Tibial artery (tissue), 4 donors: ENCODE measurements at regions of chr1 and their contacts with region 1.

Region 1: DNA sequence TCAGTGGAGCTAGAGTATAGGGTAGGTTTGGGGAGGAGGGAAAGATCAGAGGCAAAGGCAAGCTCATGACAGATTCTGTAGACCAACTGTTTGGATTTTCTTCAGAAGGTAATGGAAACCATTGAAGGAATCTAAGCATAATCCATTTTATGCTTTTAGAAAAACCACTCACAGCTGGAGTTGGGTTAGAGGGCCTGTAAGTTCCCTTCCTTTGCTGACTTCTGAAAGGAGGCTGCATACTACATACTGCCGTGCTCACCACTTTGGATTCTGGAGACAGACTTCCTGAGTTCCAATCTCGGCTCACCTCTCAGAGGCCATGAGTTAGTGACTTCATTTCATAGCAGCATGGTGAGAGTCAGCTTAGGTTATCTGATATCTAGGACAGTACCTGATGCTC is 6.4 kb upstream of the SYT2 start:
- DNase-seq: no peak
- H3K4me3 ChIP-seq: no peak overlapping the region
- H3K27ac ChIP-seq: no peak overlapping the region
- H3K4me1 ChIP-seq: peaks cover 0 to 7% (median 2%) of the 10 kb centered on the region in 4 donors
- H3K27me3 ChIP-seq: peaks cover 0 to 2% of the 10 kb centered on the region in 2 donors
- CTCF ChIP-seq: no peak

Region 2: DNA sequence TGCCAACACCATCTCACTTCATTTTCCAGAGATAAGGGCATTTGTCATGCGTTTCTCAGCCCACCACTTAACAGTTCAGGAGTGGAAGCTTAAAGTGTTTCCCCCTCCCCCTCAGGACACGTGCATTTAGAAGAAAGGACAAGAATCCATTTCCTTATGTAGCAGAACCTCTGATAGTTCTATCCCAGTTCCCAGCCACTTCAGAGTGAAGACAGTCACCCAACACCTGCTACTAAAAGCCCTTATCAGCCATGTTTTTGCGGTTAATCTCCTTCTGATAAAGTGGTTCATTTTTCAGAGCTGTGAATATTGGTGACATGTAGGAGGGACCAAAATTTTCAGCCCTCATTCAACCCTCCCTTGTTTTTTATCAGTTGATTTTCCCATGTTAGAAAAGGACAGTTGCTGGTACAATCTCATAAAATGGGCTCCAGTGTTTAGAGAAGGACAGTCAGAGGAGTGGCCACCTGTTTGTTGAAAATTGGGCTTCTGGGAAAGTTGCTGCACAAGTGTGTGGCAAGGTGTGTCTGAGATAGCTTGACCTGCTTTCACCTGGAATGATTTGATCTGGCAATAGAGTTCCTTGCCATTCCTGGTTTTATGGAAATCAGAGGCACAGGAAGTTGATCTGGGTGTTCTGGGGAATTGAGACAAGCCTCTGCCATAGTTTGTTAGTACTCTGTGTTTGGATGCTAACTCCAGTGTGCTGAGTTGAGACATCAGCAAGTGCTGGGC is 254.1 kb before region 1 on chr1:
- intact Hi-C with region 1: loop called (anchors 5 kb)
- DNase-seq: no peak
- H3K4me3 ChIP-seq: no peak overlapping the region
- H3K27ac ChIP-seq: no peak overlapping the region
- H3K4me1 ChIP-seq: peaks cover 0 to 28% (median 9%) of the 10 kb centered on the region in 4 donors
- H3K27me3 ChIP-seq: no peaks in the 10 kb centered on the region
- CTCF ChIP-seq: no peak

Region 3: GRCh38 chr1:202656951-202657646 is 59.6 kb before region 1 on chr1:
- intact Hi-C with region 1: no loop called
- DNase-seq: no peak
- H3K4me3 ChIP-seq: no peak overlapping the region
- H3K27ac ChIP-seq: no peak overlapping the region
- H3K4me1 ChIP-seq: no peaks in the 10 kb centered on the region
- H3K27me3 ChIP-seq: peaks cover 0 to 81% of the 10 kb centered on the region in 2 donors
- CTCF ChIP-seq: no peak

Region 4: GRCh38 chr1:202742496-202742895 is 25.8 kb after region 1 on chr1:
- intact Hi-C with region 1: no loop called
- DNase-seq: no peak
- H3K4me3 ChIP-seq: no peak overlapping the region
- H3K27ac ChIP-seq: no peak overlapping the region
- H3K4me1 ChIP-seq: no peaks in the 10 kb centered on the region
- H3K27me3 ChIP-seq: no peaks in the 10 kb centered on the region
- CTCF ChIP-seq: no peak